AG04449 (cell line): ENCODE measurements at regions of chr12 and their contacts with region 1.

Region 1: DNA sequence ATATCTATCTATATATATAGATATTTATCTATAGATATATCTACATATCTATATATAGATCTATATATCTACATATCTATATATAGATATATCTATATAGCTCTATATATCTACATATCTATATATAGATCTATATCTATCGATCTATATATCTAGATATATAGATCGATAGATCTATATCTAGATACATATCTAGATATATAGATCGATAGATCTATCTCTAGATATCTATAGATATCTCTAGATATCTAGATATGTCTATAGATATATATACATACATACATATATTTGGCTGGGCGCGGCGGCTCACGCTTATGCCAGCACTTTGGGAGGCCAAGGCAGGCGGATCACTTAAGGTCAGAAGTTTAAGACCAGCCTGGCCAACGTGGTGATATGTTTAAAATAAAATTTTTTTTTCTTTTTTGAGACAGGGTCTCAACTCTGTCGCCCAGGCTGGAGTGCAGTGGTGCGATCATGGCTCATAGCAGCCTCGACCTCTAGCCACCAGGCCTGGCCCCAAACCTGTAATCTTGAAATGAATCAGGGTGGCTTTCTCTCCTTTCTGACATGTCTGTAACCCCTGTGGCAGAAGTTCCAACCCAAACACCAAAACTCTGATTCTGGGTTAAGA is 18.1 kb downstream of the ARPC3 start:
- DNase-seq: no peak
- H3K4me3 ChIP-seq: no peak overlapping the region
- CTCF ChIP-seq: no peak

Region 2: DNA sequence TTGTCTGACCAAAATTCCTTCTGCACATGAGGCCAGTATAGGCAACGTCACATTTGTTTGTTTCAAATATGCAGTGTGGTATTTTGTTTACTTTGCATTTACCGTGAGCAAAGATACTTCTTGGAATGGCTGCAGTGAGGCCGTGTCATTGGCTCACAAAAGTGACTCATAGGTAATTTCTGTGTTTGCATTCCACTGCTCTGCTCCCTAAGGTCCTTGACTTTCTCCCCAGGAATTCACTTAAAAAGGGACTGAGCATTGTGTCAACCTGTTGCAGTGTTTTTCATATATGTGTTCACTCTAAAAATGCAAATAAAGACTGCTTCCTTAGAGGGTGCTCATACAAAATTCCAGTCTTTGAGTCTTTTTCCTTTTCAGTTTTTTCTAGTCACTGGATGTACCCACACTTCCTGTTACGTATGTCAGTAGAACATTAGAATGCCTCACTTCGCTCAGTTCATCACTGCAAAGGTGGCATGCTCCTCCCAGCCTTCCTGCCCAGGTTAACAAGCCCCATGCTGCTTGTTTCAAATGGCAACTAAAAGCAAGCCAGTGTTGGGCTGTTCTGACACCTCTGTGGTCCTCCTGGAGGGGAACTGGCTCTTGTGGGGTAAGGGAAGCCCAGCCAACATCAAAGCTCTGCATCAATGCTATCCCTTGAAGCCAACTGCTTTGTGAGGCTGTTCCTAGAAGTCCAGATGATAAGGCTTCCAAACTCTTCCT is 392.8 kb before region 1 on chr12:
- CTCF ChIA-PET with region 1: interaction called, 21 read pairs
- POLR2A ChIA-PET with region 1: interaction called, 4 read pairs
- DNase-seq: peak; percentile 91
- H3K4me3 ChIP-seq: no peak overlapping the region
- CTCF ChIP-seq: no peak

Region 3: GRCh38 chr12:110100315-110100970 is 331.6 kb before region 1 on chr12:
- CTCF ChIA-PET with region 1: interaction called, 65 read pairs
- POLR2A ChIA-PET with region 1: no interaction called
- DNase-seq: no peak
- H3K4me3 ChIP-seq: no peak overlapping the region
- CTCF ChIP-seq: peak; percentile 85

Region 4: GRCh38 chr12:110357548-110357947 is 74.5 kb before region 1 on chr12:
- CTCF ChIA-PET with region 1: interaction called, 11 read pairs
- POLR2A ChIA-PET with region 1: no interaction called
- DNase-seq: no peak
- H3K4me3 ChIP-seq: no peak overlapping the region
- CTCF ChIP-seq: no peak

Region 5: DNA sequence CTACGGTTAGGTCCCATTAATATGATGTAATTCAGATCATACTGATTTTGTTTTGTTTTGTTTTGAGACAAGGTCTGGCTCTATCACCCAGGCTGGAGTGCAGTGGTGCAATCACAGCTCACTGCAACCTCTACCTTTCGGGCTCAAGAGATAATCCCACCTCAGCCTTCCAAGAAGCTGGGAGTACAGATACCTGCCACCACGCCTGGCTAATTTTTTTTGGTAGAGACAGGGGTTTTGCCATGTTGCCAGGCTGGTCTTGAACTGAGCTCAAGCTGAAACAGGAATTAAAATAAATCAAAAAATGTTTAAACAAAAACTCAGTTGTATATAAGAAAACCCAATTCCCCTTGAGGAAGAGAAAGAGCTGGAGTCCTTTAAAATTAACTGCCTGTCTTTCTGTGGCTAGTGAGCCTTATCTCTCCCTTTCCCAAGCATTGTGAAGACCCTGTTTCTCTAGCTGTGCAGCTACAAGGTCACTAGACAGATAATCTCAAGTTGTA is 10.9 kb before region 1 on chr12:
- CTCF ChIA-PET with region 1: interaction called, 25 read pairs
- POLR2A ChIA-PET with region 1: no interaction called
- DNase-seq: no peak
- H3K4me3 ChIP-seq: no peak overlapping the region
- CTCF ChIP-seq: no peak

Region 6: DNA sequence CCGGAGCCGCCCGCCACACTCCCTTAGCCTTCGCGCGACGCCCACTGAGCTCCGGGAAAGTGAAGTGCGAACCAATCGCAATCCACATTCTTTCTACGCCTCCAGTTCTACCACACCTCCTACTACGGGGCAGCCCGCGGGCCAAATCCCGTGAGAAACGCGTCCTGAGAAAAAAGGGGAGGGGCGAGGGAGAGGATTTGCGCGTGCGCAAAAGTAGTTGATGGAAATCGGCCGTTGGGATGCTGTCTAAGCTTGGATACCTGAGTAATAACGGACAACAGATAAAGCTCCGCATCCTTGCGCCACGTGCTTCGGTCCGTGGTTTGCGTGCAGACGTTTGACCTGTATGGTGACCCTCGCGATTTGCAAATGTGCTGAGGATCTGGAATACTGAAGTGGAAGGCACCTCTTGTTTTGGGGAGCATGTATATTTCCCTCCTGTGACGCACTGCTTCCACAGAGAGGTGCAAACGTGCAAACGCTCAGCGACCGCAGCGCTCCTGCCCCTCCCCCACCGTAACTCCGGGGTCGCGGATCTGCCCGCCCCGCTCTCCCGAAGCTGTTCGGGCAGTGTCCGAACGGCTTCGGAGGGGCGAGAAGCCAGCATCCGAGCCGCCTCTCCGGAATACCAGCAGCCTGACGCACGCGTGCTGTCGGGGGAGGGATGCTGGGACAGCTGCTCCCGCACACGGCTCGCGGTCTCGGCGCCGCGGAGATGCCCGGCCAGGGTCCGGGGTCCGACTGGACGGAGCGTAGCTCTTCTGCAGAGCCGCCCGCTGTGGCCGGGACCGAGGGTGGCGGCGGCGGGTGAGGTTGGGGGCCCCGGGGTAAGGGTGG is 36.4 kb after region 1 on chr12 and contains the starts of genes FAM216A and GPN3:
- CTCF ChIA-PET with region 1: interaction called, 6 read pairs
- POLR2A ChIA-PET with region 1: interaction called, 10 read pairs
- DNase-seq: peak; percentile 86
- H3K4me3 ChIP-seq: peak within 1 kb of the TSS; percentile 86
- CTCF ChIP-seq: no peak